Activated CD4-positive, alpha-beta memory T cell treated with anti-CD3 and anti-CD28 coated beads for 36 hours (primary cell): ENCODE measurements at regions of chr7 and their contacts with region 1.

Region 1: GRCh38 chr7:106915873-106916272 is 50.8 kb downstream of the PIK3CG start:
- DNase-seq: peak; percentile 44
- H3K4me3 Mint-ChIP-seq: no peak overlapping the region
- H3K27ac Mint-ChIP-seq: peak overlapping the region; percentile 50
- H3K4me1 Mint-ChIP-seq: peaks cover 9% of the 10 kb centered on the region
- H3K27me3 Mint-ChIP-seq: peaks cover 1% of the 10 kb centered on the region

Region 2: GRCh38 chr7:106870983-106871410 is 44.9 kb before region 1 on chr7:
- CTCF ChIA-PET with region 1: interaction called, 3 read pairs
- POLR2A ChIA-PET with region 1: interaction called, 6 read pairs
- intact Hi-C with region 1: loop called (anchors 2 kb)
- DNase-seq: no peak
- H3K4me3 Mint-ChIP-seq: no peak overlapping the region
- H3K27ac Mint-ChIP-seq: peak overlapping the region; percentile 40
- H3K4me1 Mint-ChIP-seq: peaks cover 69% of the 10 kb centered on the region
- H3K27me3 Mint-ChIP-seq: no peaks in the 10 kb centered on the region